Naive thymus-derived CD4-positive, alpha-beta T cell (primary cell): ENCODE measurements at regions of chr18 and their contacts with region 1.

Region 1: DNA sequence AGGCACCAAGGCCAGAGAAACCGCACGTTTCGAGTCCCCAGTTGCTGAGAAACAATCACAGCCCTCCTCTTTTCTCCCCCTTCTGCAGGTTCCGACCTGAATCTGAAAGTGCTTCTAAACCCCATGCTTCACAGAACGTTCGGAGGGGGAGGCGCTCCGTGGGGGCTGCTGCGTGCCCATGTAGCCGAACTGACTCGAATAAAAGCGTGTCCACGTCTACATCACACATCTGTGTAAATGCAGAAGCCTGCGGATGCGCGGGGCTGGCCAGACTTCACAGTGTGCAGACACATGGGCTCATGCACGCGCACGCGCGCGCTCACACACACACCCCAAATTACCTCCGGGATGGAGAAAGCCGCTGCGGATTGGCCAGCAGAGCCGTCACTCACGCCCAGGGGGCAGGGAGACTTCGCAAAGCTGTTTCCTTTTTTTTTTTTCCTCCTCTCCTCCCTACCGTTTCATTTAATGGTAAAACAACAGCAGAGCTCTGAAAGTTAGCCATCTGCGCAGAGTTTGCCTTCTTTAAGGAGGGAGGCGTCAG is 2.3 kb downstream of the ZNF516 start:
- DNase-seq: peak; percentile 97 to 99 (median 99)
- ATAC-seq: peak; percentile 86
- H3K4me3 ChIP-seq: peak overlapping the region; percentile 87
- H3K4me3 Mint-ChIP-seq: peak overlapping the region; percentile 94 to 96 (median 95)
- H3K27ac ChIP-seq: peak overlapping the region; percentile 65
- H3K27ac Mint-ChIP-seq: peak overlapping the region; percentile 57 to 95 (median 87)
- H3K4me1 ChIP-seq: peaks cover 8 to 9% of the 10 kb centered on the region in 2 donors
- H3K4me1 Mint-ChIP-seq: peaks cover 28 to 53% (median 41%) of the 10 kb centered on the region in 7 donors
- H3K27me3 ChIP-seq: no peaks in the 10 kb centered on the region
- H3K27me3 Mint-ChIP-seq: peaks cover 0 to 80% (median 0%) of the 10 kb centered on the region in 5 donors

Region 2: DNA sequence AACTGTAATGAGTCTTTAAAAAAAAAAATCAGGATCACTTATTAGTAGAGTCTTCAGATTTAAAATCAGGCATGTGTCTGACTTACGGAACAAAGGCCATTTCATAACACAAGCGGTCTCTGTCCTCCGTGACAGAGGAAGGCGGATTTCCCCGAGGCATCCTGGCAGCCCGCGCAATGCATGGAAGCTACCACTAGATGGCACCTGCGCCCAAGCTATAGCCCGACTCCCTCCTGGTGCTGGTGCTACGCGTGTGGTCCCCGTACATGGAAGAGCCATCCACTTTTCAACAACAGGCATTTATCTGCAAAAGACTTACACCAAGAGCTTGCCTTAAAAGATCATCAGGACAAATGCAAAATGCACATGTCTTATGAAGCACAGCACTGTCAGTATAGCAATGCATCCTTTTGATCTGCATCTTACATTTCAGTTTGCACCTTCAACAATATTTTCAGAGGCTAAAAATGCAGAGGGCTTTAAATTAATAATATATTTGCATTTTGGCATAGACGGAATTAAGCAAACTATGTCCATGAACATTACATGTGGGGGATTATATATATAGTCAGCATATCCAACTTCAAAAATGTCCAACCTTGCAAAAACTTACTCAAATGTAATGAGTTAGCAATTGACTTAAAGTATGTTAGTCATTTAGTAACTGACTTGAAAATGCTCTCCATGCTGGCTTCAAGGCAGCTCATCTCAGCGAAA is 93.7 kb before region 1 on chr18:
- CTCF ChIA-PET with region 1: no interaction called
- POLR2A ChIA-PET with region 1: interaction called, 3 read pairs
- intact Hi-C with region 1: loop called in 1 of 2 experiments (anchors 5 kb)
- DNase-seq: peak; percentile 47 to 78 (median 71)
- ATAC-seq: peak; percentile 93
- H3K4me3 ChIP-seq: no peak overlapping the region
- H3K4me3 Mint-ChIP-seq: peak overlapping the region in 1 of 10 donors; percentile 12
- H3K27ac ChIP-seq: no peak overlapping the region
- H3K27ac Mint-ChIP-seq: peak overlapping the region in 2 of 9 donors; percentile 41 to 73
- H3K4me1 ChIP-seq: no peaks in the 10 kb centered on the region
- H3K4me1 Mint-ChIP-seq: peaks cover 5 to 38% (median 27%) of the 10 kb centered on the region in 7 donors
- H3K27me3 ChIP-seq: no peaks in the 10 kb centered on the region
- H3K27me3 Mint-ChIP-seq: peaks cover 0 to 17% (median 0%) of the 10 kb centered on the region in 5 donors

Region 3: GRCh38 chr18:76467371-76468190 is 25.2 kb before region 1 on chr18:
- CTCF ChIA-PET with region 1: no interaction called
- POLR2A ChIA-PET with region 1: interaction called, 3 read pairs
- intact Hi-C with region 1: loop called in 1 of 2 experiments (anchors 2 kb)
- DNase-seq: peak in 1 of 9 donors; percentile 9
- ATAC-seq: peak; percentile 43
- H3K4me3 ChIP-seq: no peak overlapping the region
- H3K4me3 Mint-ChIP-seq: peak overlapping the region; percentile 65 to 84 (median 73)
- H3K27ac ChIP-seq: peak overlapping the region; percentile 38
- H3K27ac Mint-ChIP-seq: peak overlapping the region in 8 of 9 donors; percentile 63 to 90 (median 84)
- H3K4me1 ChIP-seq: peaks cover 0 to 19% of the 10 kb centered on the region in 2 donors
- H3K4me1 Mint-ChIP-seq: peaks cover 15 to 64% (median 54%) of the 10 kb centered on the region in 7 donors
- H3K27me3 ChIP-seq: no peaks in the 10 kb centered on the region
- H3K27me3 Mint-ChIP-seq: peaks cover 0 to 2% (median 0%) of the 10 kb centered on the region in 5 donors

Region 4: DNA sequence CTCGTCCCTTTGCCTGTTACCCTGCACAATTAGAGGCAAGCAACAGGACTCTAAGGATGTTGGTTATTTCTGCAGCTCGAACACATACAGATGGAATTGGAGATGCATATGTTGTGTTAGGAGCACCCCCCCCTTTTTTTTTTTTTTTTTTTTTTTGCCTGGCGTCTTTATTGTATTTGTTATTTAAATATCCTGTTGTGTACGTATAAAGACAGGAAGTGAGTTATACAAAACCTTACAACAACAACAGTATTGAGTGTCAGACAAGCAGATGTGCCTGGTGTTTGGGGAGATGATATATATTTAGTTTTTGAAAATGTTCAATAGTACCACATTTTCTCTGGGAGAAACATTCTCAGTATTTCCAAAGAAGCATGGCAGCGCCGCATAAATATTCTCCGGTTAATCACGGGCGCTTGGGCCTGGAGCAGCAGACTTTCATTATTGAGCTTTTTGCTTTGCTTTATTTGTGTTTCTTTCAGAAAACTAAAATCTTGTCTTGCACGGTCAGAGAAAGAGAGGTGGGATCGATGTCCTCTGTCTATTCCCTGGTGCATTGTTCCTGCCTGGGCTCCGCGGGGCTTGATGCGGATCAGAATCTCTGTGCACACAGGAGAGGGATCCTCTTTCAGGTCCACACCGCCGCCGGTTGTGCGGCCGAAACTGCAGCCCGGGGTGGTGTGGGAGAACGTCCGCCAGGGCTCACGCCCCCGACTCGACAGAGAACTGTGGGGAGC is 25.6 kb after region 1 on chr18:
- CTCF ChIA-PET with region 1: no interaction called
- POLR2A ChIA-PET with region 1: interaction called, 4 read pairs
- intact Hi-C with region 1: loop called (anchors 2 kb)
- DNase-seq: peak in 2 of 9 donors; percentile 3 to 13
- ATAC-seq: peak; percentile 56
- H3K4me3 ChIP-seq: peak overlapping the region; percentile 32
- H3K4me3 Mint-ChIP-seq: peak overlapping the region; percentile 28 to 80 (median 75)
- H3K27ac ChIP-seq: no peak overlapping the region
- H3K27ac Mint-ChIP-seq: peak overlapping the region in 4 of 9 donors; percentile 29 to 76 (median 36)
- H3K4me1 ChIP-seq: peaks cover 0 to 11% of the 10 kb centered on the region in 2 donors
- H3K4me1 Mint-ChIP-seq: peaks cover 5 to 22% (median 17%) of the 10 kb centered on the region in 7 donors
- H3K27me3 ChIP-seq: no peaks in the 10 kb centered on the region
- H3K27me3 Mint-ChIP-seq: peaks cover 18 to 45% (median 31%) of the 10 kb centered on the region in 5 donors

Region 5: DNA sequence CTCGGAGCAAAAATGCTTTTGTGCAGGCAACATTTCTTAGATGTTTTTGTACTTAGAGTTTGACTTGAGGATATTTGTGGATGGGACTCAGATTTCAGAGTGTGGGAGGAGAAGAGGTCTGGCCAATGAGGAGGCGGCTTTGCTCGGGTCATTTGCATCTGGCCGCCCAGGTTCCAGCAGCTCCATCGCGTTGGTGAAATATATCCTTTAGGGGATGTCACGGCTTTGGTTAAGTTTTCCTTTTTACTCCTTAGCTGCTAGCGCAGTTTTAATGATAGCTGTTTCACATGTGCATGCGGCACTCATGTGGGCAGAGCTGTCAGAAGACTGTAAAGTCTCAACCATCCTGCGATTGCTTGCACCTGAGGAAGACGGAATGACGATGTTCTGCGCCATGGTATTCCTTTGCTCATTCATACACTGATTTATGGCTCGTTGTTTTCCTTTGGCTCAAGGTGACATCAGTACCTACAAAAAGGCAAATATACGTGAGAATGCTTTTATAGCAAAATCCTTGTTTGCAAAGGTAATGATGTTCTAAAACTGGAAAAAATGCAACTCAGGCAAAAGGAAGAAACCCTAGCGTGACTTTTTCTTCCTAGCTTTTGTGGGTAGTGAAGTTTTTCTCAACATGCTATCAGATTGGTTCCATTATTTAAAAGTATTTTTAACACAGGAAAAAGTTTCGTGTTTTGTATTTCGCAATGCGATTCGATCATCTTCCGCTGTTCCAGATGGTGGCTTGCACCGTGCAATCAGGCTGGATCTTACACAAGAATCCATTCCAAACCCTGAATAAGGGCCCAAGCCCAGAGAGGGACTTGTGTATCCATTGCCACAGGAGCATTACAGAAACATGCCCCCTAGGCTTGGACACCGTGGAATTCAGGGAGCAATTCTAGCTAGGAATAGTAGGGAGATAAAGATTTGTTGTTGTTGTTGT is 72.8 kb after region 1 on chr18:
- CTCF ChIA-PET with region 1: no interaction called
- POLR2A ChIA-PET with region 1: no interaction called
- intact Hi-C with region 1: no loop called
- DNase-seq: no peak
- ATAC-seq: peak; percentile 65
- H3K4me3 ChIP-seq: no peak overlapping the region
- H3K4me3 Mint-ChIP-seq: peak overlapping the region in 6 of 10 donors; percentile 10 to 47 (median 30)
- H3K27ac ChIP-seq: no peak overlapping the region
- H3K27ac Mint-ChIP-seq: peak overlapping the region in 1 of 9 donors; percentile 41
- H3K4me1 ChIP-seq: no peaks in the 10 kb centered on the region
- H3K4me1 Mint-ChIP-seq: peaks cover 0 to 11% (median 5%) of the 10 kb centered on the region in 7 donors
- H3K27me3 ChIP-seq: no peaks in the 10 kb centered on the region
- H3K27me3 Mint-ChIP-seq: peaks cover 6 to 44% (median 12%) of the 10 kb centered on the region in 5 donors

Region 6: GRCh38 chr18:76822510-76823160 is 329.9 kb after region 1 on chr18 and contains the start of gene ZNF236:
- CTCF ChIA-PET with region 1: no interaction called
- POLR2A ChIA-PET with region 1: no interaction called
- intact Hi-C with region 1: loop called (anchors 2 kb)
- DNase-seq: peak; percentile 38 to 78 (median 61)
- ATAC-seq: peak; percentile 76
- H3K4me3 ChIP-seq: peak within 1 kb of the TSS; percentile 99
- H3K4me3 Mint-ChIP-seq: peak within 1 kb of the TSS; percentile 88 to 96 (median 93)
- H3K27ac ChIP-seq: peak within 1 kb of the TSS; percentile 84
- H3K27ac Mint-ChIP-seq: peak within 1 kb of the TSS; percentile 89 to 97 (median 96)
- H3K4me1 ChIP-seq: peaks cover 8 to 10% of the 10 kb centered on the region in 2 donors
- H3K4me1 Mint-ChIP-seq: peaks cover 38 to 65% (median 56%) of the 10 kb centered on the region in 7 donors
- H3K27me3 ChIP-seq: no peaks in the 10 kb centered on the region
- H3K27me3 Mint-ChIP-seq: no peaks in the 10 kb centered on the region
- total RNA-seq, gene ZNF236: 25.9 to 34.5 (median 30.6) TPM

Region 7: GRCh38 chr18:77101410-77102258 is 608.9 kb after region 1 on chr18:
- CTCF ChIA-PET with region 1: no interaction called
- POLR2A ChIA-PET with region 1: no interaction called
- intact Hi-C with region 1: loop called (anchors 2 to 5 kb)
- DNase-seq: peak in 2 of 9 donors; percentile 26 to 73
- ATAC-seq: peak; percentile 62
- H3K4me3 ChIP-seq: peak overlapping the region; percentile 45
- H3K4me3 Mint-ChIP-seq: peak overlapping the region; percentile 65 to 92 (median 82)
- H3K27ac ChIP-seq: peak overlapping the region; percentile 73
- H3K27ac Mint-ChIP-seq: peak overlapping the region; percentile 94 to 99 (median 98)
- H3K4me1 ChIP-seq: peaks cover 88 to 94% of the 10 kb centered on the region in 2 donors
- H3K4me1 Mint-ChIP-seq: peaks cover 71 to 100% (median 94%) of the 10 kb centered on the region in 7 donors
- H3K27me3 ChIP-seq: no peaks in the 10 kb centered on the region
- H3K27me3 Mint-ChIP-seq: no peaks in the 10 kb centered on the region

Region 8: DNA sequence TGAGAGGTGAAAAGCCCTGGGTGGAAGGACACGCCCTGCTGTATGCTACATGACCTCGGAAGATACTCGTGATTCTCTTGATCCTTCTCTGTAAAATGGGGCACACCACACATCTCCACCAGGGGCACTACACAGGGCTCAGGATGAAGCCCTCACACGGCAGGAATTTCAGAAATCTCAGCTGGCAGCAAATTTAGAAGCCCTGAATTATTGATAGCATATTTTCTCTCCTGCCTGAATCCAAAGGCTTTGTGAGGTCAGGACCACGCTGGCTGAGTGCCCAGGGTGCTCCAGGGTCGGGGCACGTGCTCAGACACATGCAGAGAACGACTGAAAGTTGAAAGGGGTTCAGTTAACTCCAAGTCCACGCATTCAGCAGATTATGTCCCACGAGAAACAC is 714.8 kb after region 1 on chr18:
- CTCF ChIA-PET with region 1: no interaction called
- POLR2A ChIA-PET with region 1: no interaction called
- intact Hi-C with region 1: loop called in 1 of 2 experiments (anchors 5 kb)
- DNase-seq: peak in 7 of 9 donors; percentile 53 to 74 (median 62)
- ATAC-seq: peak; percentile 91
- H3K4me3 ChIP-seq: no peak overlapping the region
- H3K4me3 Mint-ChIP-seq: peak overlapping the region; percentile 54 to 99 (median 72)
- H3K27ac ChIP-seq: no peak overlapping the region
- H3K27ac Mint-ChIP-seq: peak overlapping the region; percentile 37 to 99 (median 70)
- H3K4me1 ChIP-seq: peaks cover 23 to 33% of the 10 kb centered on the region in 2 donors
- H3K4me1 Mint-ChIP-seq: peaks cover 24 to 55% (median 47%) of the 10 kb centered on the region in 7 donors
- H3K27me3 ChIP-seq: no peaks in the 10 kb centered on the region
- H3K27me3 Mint-ChIP-seq: peaks cover 0 to 9% (median 0%) of the 10 kb centered on the region in 5 donors